Naive thymus-derived CD4-positive, alpha-beta T cell (primary cell): ENCODE measurements at regions of chr5 and their contacts with region 1.

Region 1: DNA sequence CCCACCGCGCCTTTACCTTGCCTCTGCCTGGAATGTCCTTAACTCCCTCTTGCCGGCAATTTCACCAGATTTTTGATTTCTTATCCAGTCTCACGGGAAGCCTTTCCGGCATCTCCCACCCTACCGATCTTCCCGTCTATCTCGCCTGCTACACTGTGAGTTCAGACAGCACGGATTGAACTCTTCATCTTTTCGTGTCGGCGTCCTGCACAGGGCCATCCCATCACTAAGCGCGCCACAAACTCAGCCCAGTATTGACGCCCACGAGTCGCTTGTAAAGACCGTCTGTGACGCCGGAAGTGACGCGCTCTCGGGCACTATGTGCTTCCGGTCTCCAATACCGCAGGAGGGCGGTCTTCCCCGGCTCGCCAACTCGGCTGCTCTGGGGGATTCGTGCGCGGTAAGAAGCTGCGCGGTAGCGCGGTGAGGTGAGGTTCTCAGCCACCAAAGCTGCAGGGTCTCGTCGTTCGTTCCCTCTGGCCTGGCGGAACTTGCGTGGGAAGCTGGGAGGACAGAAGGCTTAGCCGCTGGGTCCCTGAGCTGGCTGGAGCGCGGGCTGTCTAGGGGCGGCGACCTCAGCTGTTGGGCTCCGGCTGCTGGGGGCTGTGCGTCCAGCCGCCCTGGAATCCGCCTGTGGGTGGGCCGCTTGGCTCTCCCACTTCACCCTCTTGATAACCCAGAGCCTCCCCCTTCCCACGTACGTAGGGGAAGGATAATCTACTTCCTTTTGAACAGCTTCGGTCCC is at the start of gene ZCCHC9:
- DNase-seq: peak; percentile 84 to 94 (median 90)
- ATAC-seq: peak; percentile 96
- H3K4me3 ChIP-seq: peak within 1 kb of the TSS; percentile 75
- H3K4me3 Mint-ChIP-seq: peak within 1 kb of the TSS; percentile 91 to 99 (median 96)
- H3K27ac ChIP-seq: peak within 1 kb of the TSS; percentile 96
- H3K27ac Mint-ChIP-seq: peak within 1 kb of the TSS; percentile 92 to 99 (median 98)
- H3K4me1 ChIP-seq: peaks cover 14 to 21% of the 10 kb centered on the region in 2 donors
- H3K4me1 Mint-ChIP-seq: peaks cover 34 to 73% (median 55%) of the 10 kb centered on the region in 7 donors
- H3K27me3 ChIP-seq: no peaks in the 10 kb centered on the region
- H3K27me3 Mint-ChIP-seq: no peaks in the 10 kb centered on the region
- total RNA-seq, gene ZCCHC9: 15.5 to 35.1 (median 27.5) TPM

Region 2: GRCh38 chr5:79514391-79515105 is 1786.9 kb before region 1 on chr5:
- CTCF ChIA-PET with region 1: no interaction called
- POLR2A ChIA-PET with region 1: interaction called, 4 read pairs
- intact Hi-C with region 1: loop called (anchors 5 kb)
- DNase-seq: peak; percentile 80 to 94 (median 91)
- ATAC-seq: peak; percentile 91
- H3K4me3 ChIP-seq: peak overlapping the region; percentile 71
- H3K4me3 Mint-ChIP-seq: peak overlapping the region; percentile 88 to 99 (median 98)
- H3K27ac ChIP-seq: peak overlapping the region; percentile 97
- H3K27ac Mint-ChIP-seq: peak overlapping the region; percentile 93 to 99 (median 98)
- H3K4me1 ChIP-seq: peaks cover 4 to 26% of the 10 kb centered on the region in 2 donors
- H3K4me1 Mint-ChIP-seq: peaks cover 6 to 53% (median 40%) of the 10 kb centered on the region in 7 donors
- H3K27me3 ChIP-seq: peaks cover 0 to 7% of the 10 kb centered on the region in 2 donors
- H3K27me3 Mint-ChIP-seq: peaks cover 0 to 27% (median 23%) of the 10 kb centered on the region in 5 donors

Region 3: DNA sequence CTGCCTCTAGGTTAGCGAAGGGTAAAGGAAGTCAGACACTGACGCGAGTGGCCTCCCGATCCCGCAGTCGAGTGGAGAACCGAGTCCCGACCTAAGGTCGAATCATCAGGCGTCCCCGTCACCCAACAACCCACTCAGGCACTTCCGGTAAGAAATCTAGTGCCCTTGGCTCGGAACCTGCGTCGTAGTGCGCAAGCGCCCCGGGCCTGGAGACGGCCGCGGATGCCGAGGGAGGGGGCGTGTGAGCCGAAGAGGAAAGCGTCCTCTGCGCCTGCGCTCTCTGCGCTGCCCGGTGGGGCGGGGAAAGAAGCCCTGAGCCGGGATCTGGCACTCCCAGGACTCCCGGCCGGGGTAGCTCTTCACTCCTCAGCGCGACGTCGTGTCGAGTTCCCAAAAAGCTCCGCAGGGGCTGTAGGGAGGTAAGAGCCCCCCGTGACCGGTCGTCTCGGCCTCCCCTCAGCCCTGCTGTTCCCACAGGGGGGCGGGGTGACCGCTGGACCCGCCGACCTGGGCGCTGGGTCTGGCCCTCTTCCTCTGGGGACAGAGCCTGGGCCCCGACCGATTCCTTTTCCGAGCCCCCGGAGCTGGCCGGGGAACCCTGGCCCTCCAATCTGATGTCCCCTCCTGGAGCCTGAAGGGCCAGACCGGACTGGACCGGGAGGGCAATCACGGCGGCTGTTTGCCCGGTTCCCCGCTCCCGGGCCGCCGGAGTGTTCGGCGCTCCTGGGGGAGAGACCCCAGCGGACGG is 893.5 kb before region 1 on chr5 and contains the start of gene ZFYVE16:
- CTCF ChIA-PET with region 1: no interaction called
- POLR2A ChIA-PET with region 1: no interaction called
- intact Hi-C with region 1: loop called (anchors 1 kb)
- DNase-seq: peak; percentile 93 to 98 (median 94)
- ATAC-seq: peak; percentile 93
- H3K4me3 ChIP-seq: peak within 1 kb of the TSS; percentile 94
- H3K4me3 Mint-ChIP-seq: peak within 1 kb of the TSS; percentile 91 to 99 (median 96)
- H3K27ac ChIP-seq: peak within 1 kb of the TSS; percentile 85
- H3K27ac Mint-ChIP-seq: peak within 1 kb of the TSS; percentile 97 to 100 (median 99)
- H3K4me1 ChIP-seq: peaks cover 0 to 3% of the 10 kb centered on the region in 2 donors
- H3K4me1 Mint-ChIP-seq: peaks cover 20 to 32% (median 21%) of the 10 kb centered on the region in 7 donors
- H3K27me3 ChIP-seq: no peaks in the 10 kb centered on the region
- H3K27me3 Mint-ChIP-seq: peaks cover 0 to 7% (median 0%) of the 10 kb centered on the region in 5 donors
- total RNA-seq, gene ZFYVE16: 12.0 to 32.0 (median 26.0) TPM

Region 4: GRCh38 chr5:80686757-80687156 is 614.7 kb before region 1 on chr5:
- CTCF ChIA-PET with region 1: interaction called, 6 read pairs
- POLR2A ChIA-PET with region 1: no interaction called
- intact Hi-C with region 1: loop called (anchors 1 kb)
- DNase-seq: peak in 5 of 9 donors; percentile 11 to 42 (median 19)
- ATAC-seq: no peak
- H3K4me3 ChIP-seq: no peak overlapping the region
- H3K4me3 Mint-ChIP-seq: no peak overlapping the region
- H3K27ac ChIP-seq: no peak overlapping the region
- H3K27ac Mint-ChIP-seq: no peak overlapping the region
- H3K4me1 ChIP-seq: no peaks in the 10 kb centered on the region
- H3K4me1 Mint-ChIP-seq: peaks cover 7 to 35% (median 14%) of the 10 kb centered on the region in 7 donors
- H3K27me3 ChIP-seq: no peaks in the 10 kb centered on the region
- H3K27me3 Mint-ChIP-seq: no peaks in the 10 kb centered on the region

Region 5: DNA sequence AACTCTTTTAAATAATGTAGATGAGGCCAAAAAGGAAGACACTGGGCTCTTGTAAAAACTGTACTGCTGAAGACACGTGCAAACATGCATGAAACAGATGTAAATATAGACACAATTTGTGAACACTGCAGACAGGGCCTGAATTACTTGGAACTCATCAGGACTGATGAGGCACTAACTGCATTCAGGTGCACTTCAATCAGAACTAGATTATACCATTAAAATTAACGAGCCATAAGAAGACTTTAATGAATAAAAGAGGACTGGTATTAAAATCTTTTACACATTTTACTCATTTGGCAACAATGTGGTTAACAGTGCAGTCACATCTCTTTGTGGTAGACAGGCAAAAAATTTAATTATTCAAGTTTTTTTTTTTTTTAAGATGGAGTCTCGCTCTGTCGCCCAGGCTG is 13.4 kb before region 1 on chr5:
- CTCF ChIA-PET with region 1: interaction called, 6 read pairs
- POLR2A ChIA-PET with region 1: no interaction called
- intact Hi-C with region 1: loop called in 1 of 2 experiments (anchors 1 kb)
- DNase-seq: no peak
- ATAC-seq: no peak
- H3K4me3 ChIP-seq: no peak overlapping the region
- H3K4me3 Mint-ChIP-seq: no peak overlapping the region
- H3K27ac ChIP-seq: no peak overlapping the region
- H3K27ac Mint-ChIP-seq: no peak overlapping the region
- H3K4me1 ChIP-seq: peaks cover 6 to 7% of the 10 kb centered on the region in 2 donors
- H3K4me1 Mint-ChIP-seq: peaks cover 14 to 56% (median 43%) of the 10 kb centered on the region in 7 donors
- H3K27me3 ChIP-seq: no peaks in the 10 kb centered on the region
- H3K27me3 Mint-ChIP-seq: no peaks in the 10 kb centered on the region

Region 6: DNA sequence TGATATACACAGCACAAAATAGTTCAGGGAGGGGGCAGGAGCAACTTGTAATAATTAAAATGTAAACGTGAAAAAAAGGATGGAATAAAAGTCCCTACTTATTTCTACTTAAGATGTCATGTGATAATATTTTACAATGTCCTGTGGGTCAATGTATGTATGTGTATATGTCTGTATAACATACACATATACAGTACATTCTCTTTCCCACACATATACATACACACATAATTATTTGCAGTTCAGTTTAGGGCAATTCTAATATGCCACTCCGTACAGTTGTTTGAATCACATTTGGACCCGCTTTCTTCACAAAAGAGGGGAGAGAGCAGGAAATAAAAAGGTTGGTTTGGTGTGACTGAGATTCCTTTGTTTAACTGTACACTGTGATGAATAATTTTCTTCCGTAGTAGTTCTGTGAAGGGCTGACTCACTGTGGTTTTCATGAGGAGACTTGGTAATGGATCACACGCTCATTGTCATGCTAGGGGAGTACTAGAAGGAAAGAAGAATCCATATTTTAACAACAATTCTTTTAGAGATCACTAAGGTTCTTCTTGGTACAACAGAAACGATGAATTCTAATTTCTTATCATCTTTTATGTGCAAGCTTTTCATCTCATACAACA is 118.7 kb after region 1 on chr5:
- CTCF ChIA-PET with region 1: no interaction called
- POLR2A ChIA-PET with region 1: no interaction called
- intact Hi-C with region 1: no loop called
- DNase-seq: no peak
- ATAC-seq: peak; percentile 61
- H3K4me3 ChIP-seq: no peak overlapping the region
- H3K4me3 Mint-ChIP-seq: peak overlapping the region in 1 of 10 donors; percentile 27
- H3K27ac ChIP-seq: no peak overlapping the region
- H3K27ac Mint-ChIP-seq: peak overlapping the region in 3 of 9 donors; percentile 3 to 77 (median 38)
- H3K4me1 ChIP-seq: no peaks in the 10 kb centered on the region
- H3K4me1 Mint-ChIP-seq: peaks cover 0 to 31% (median 0%) of the 10 kb centered on the region in 7 donors
- H3K27me3 ChIP-seq: no peaks in the 10 kb centered on the region
- H3K27me3 Mint-ChIP-seq: no peaks in the 10 kb centered on the region

Region 7: DNA sequence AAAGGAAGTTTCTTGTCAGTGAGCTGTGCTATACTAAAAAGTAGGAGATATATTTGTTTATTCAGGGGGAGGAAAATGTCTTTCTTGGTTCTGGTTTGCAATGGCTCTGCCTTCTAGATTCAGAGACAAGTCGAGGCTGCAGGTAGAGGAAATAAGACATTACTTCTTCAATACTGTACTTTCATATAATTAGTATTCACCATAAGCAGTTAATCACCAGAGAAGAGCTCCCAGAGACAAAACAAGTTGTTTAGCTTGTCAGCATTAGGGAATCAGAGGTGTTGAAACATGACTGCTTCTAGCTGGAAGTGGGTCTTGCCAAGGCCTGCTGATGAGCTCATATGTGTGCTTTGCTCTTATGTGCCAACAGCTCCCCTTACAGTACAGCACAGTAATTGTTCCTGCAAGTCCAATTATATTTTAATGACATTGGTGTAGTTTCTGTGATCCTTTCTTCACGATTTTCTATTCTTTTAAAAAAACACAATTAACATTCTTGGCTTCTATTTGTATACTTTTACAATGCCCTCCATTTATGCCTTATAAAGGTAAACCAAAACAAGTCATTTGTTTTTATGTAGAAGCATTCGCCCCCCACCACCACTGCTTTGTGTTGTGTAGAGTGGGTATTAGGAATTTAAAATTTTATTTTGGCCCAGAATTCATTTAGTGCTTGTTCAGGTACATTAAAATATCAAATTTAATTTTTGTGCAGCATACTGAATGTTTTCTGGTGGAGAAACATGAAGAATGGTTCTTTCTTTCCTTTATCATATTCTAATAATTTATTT is 864.5 kb after region 1 on chr5:
- CTCF ChIA-PET with region 1: no interaction called
- POLR2A ChIA-PET with region 1: no interaction called
- intact Hi-C with region 1: loop called (anchors 1 to 10 kb)
- DNase-seq: peak in 7 of 9 donors; percentile 39 to 70 (median 58)
- ATAC-seq: peak; percentile 96
- H3K4me3 ChIP-seq: no peak overlapping the region
- H3K4me3 Mint-ChIP-seq: no peak overlapping the region
- H3K27ac ChIP-seq: no peak overlapping the region
- H3K27ac Mint-ChIP-seq: peak overlapping the region in 6 of 9 donors; percentile 3 to 65 (median 17)
- H3K4me1 ChIP-seq: no peaks in the 10 kb centered on the region
- H3K4me1 Mint-ChIP-seq: peaks cover 0 to 12% (median 7%) of the 10 kb centered on the region in 7 donors
- H3K27me3 ChIP-seq: no peaks in the 10 kb centered on the region
- H3K27me3 Mint-ChIP-seq: no peaks in the 10 kb centered on the region

Region 8: DNA sequence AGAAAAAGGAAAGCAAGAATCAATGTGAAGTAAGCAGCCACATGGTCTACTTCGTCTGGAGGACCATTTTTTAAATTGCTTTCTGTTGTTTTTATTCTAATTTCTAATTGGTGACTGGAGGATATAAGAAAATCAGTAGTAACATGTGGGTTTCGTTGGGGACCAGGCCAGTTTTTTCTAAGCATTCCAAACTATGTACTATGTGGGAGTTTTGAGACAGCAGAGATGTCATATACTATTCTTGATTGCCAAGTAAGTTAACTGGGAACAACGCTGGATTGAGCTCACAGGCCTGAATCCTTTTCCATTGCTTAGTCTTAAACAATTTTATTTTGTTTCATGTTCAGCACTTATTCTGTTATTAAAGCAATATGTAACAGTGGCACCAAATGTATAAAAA is 1550.0 kb after region 1 on chr5:
- CTCF ChIA-PET with region 1: no interaction called
- POLR2A ChIA-PET with region 1: no interaction called
- intact Hi-C with region 1: no loop called
- DNase-seq: no peak
- ATAC-seq: no peak
- H3K4me3 ChIP-seq: no peak overlapping the region
- H3K4me3 Mint-ChIP-seq: no peak overlapping the region
- H3K27ac ChIP-seq: no peak overlapping the region
- H3K27ac Mint-ChIP-seq: no peak overlapping the region
- H3K4me1 ChIP-seq: no peaks in the 10 kb centered on the region
- H3K4me1 Mint-ChIP-seq: no peaks in the 10 kb centered on the region
- H3K27me3 ChIP-seq: no peaks in the 10 kb centered on the region
- H3K27me3 Mint-ChIP-seq: peaks cover 0 to 5% (median 4%) of the 10 kb centered on the region in 5 donors